ENCODE measurements at regions of chr13 and their contacts with region 1.

Region 1: DNA sequence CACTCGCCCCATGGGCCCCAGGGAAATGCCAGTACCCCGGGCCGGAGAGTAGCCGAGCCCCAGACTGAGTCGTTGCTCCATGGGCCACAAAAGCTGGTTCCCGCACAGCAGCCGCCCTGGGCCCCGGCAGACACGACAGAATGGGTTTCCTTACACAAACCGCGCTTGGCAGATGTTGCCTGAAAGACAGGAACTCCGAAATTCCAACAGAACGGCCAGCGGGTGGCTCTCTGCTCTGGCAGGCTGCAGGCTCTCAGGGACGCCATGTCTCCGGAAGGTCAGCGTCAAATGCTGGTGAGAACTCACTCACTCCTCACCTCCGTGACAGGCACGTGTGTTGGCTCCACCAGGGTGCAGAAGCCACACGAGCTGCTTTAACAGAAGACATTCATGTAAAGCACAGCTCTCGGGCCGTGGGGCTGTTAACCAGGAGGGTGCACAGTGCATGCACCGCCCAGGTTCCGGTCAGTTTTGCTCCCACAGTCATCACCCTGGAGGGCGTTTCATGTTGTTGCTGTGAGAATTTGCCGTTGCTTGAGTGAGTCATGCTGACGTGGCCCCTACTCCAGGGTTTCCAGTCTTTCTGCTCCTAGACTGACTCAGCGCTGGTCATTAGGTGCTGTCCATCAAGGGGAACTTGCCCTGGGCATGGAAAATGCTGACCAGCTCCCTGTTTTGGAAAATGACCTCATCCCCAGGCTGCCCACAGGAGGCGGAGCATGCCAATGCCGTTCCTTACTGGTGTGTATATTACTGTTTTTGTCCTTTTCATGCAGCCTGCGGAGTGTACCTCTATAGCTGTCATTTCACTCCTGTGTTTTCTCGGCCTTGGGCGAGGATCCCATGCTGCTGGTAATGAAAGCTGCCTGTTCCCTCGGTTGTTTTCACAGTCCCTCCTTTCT is 44.8 kb downstream of the ANKRD10 start:
- DNase-seq: peak; percentile 96 to 98
- ATAC-seq: peak; percentile 87 to 88
- H3K4me3 ChIP-seq: peak overlapping the region; percentile 70 to 82 (median 77)
- H3K27ac ChIP-seq: peak overlapping the region; percentile 98 to 99 (median 99)
- H3K4me1 ChIP-seq: peaks cover 42% of the 10 kb centered on the region in 2 donors
- H3K27me3 ChIP-seq: no peaks in the 10 kb centered on the region
- CTCF ChIP-seq: peak; percentile 13 to 53 (median 26)
- POLR2A ChIP-seq: peak; percentile 49 to 80

Region 2: DNA sequence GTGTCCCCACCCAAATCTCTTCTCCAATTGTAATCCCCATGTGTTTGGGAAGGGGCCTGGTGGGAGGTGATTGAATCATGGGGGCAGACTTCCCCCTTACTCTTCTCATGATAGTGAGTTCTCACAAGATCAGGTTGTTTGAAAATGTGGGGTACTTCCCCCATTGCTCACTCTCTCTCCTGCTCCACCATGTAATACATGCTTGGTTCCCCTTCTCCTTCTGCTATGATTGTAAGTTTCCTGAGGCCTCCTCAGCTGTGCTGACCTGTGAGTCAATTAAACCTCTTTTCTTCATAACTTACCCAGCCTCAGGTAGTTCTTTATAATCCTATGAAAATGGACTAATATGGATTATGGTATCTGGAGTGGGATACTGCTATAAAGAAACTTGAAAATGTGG is 132.5 kb before region 1 on chr13:
- in situ Hi-C with region 1: no loop called
- intact Hi-C with region 1: no loop called
- DNase-seq: no peak
- ATAC-seq: no peak
- H3K4me3 ChIP-seq: no peak overlapping the region
- H3K27ac ChIP-seq: no peak overlapping the region
- H3K4me1 ChIP-seq: no peaks in the 10 kb centered on the region
- H3K27me3 ChIP-seq: no peaks in the 10 kb centered on the region
- CTCF ChIP-seq: no peak
- POLR2A ChIP-seq: no peak

Region 3: DNA sequence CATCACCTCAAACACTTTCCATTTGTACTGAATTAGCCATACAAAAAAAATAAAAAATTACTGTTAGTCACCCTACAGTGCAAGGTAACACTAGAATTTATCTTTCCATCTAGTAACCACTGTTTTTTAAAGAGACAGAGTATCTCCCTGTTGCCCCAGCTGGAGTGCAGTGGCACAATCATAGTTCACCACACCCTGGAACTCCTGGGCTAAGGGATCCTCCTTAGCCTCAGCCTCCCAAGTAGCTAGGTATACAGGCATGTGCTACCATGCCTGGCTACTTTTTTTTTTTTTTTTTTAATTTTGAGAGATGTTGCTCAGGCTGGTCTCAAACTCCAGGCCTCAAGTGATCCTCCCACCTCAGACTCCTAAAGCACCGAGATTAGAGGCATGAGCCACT is 27.0 kb after region 1 on chr13:
- in situ Hi-C with region 1: no loop called
- intact Hi-C with region 1: loop called (anchors 1 kb)
- DNase-seq: no peak
- ATAC-seq: peak in 1 of 2 donors; percentile 17
- H3K4me3 ChIP-seq: no peak overlapping the region
- H3K27ac ChIP-seq: peak overlapping the region; percentile 63 to 70 (median 66)
- H3K4me1 ChIP-seq: peaks cover 16 to 25% of the 10 kb centered on the region in 2 donors
- H3K27me3 ChIP-seq: no peaks in the 10 kb centered on the region
- CTCF ChIP-seq: no peak
- POLR2A ChIP-seq: no peak